A673 (cell line): ENCODE measurements at regions of chr14 and their contacts with region 1.

Region 1: GRCh38 chr14:21092273-21093011 is 6.0 kb downstream of the ZNF219 start:
- DNase-seq: peak; percentile 74
- H3K4me3 ChIP-seq: no peak overlapping the region
- H3K27ac ChIP-seq: peak overlapping the region; percentile 60
- H3K4me1 ChIP-seq: peaks cover 46% of the 10 kb centered on the region
- H3K27me3 ChIP-seq: no peaks in the 10 kb centered on the region
- CTCF ChIP-seq: peak; percentile 100

Region 2: GRCh38 chr14:20956376-20956976 is 136.0 kb before region 1 on chr14:
- CTCF ChIA-PET with region 1: no interaction called
- POLR2A ChIA-PET with region 1: no interaction called
- intact Hi-C with region 1: no loop called
- DNase-seq: no peak
- H3K4me3 ChIP-seq: no peak overlapping the region
- H3K27ac ChIP-seq: no peak overlapping the region
- H3K4me1 ChIP-seq: peaks cover 2% of the 10 kb centered on the region
- H3K27me3 ChIP-seq: no peaks in the 10 kb centered on the region
- CTCF ChIP-seq: no peak

Region 3: DNA sequence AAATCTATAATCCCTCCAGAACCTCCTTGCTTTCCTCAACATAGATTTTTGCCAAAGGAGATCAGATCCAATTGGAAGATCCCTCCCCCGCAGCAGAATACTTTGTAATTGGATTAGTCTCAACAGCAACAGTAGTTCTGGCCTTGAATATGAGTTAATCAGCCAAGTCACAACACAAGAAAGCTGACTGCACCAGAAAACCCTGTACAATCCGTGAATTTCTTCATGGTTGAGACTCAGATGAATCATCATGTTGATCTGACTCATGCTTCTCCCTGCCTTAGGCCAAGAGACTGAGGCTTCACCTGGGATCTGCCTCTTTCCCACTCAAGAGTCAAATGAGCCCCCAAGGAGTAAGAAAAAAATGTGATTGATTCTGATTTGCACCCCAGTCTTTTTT is 105.6 kb before region 1 on chr14:
- CTCF ChIA-PET with region 1: no interaction called
- POLR2A ChIA-PET with region 1: no interaction called
- intact Hi-C with region 1: no loop called
- DNase-seq: peak; percentile 74
- H3K4me3 ChIP-seq: no peak overlapping the region
- H3K27ac ChIP-seq: peak overlapping the region; percentile 63
- H3K4me1 ChIP-seq: peaks cover 20% of the 10 kb centered on the region
- H3K27me3 ChIP-seq: no peaks in the 10 kb centered on the region
- CTCF ChIP-seq: no peak

Region 4: DNA sequence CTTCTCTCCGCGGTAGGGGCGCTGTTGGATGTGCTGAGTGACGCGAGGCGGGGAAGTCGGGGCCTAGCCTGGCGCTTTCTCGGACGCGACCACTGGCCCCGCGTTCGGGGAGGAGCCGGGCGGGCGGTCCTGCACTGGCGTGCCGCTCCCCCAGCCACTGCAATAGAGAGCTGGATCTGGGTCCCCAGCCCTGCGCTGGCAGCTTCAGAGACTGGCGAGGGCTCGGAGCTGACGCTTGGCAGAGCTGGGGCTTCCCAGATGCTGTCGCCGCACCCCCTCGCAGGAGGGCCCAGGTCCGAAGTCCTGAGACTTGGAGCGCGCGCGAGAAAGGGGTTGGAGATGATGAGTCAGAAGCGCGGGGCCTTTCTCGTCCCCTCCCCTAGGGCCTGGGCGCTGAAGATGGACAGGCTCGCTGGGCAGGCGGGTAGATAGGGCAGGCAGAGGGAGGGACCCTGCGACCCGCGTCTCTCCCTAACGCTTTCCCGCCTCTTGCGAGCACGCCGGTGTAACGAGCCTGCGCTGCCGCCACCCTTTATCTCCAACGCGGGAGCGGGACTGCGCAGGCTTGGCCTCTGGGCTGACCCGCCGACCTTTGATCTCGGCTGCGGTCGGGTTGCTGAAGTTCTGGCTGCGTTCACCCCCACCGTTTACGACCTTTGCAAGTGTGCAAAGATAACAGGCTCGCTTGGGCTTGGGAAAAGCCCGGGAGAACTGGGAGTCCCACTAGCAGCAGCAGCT is 11.4 kb after region 1 on chr14:
- CTCF ChIA-PET with region 1: interaction called, 32 read pairs
- POLR2A ChIA-PET with region 1: no interaction called
- intact Hi-C with region 1: loop called (anchors 1 kb)
- DNase-seq: peak; percentile 99
- H3K4me3 ChIP-seq: peak overlapping the region; percentile 92
- H3K27ac ChIP-seq: peak overlapping the region; percentile 100
- H3K4me1 ChIP-seq: peaks cover 30% of the 10 kb centered on the region
- H3K27me3 ChIP-seq: no peaks in the 10 kb centered on the region
- CTCF ChIP-seq: peak; percentile 84